Activated CD4-positive, alpha-beta T cell treated with anti-CD3 and anti-CD28 coated beads for 36 hours (primary cell): ENCODE measurements at regions of chr4 and their contacts with region 1.

Region 1: GRCh38 chr4:74320559-74321118 is 12.4 kb downstream of the EPGN start:
- DNase-seq: peak; percentile 66
- ATAC-seq: peak; percentile 99
- H3K4me3 Mint-ChIP-seq: no peak overlapping the region
- H3K27ac Mint-ChIP-seq: no peak overlapping the region
- H3K4me1 Mint-ChIP-seq: peaks cover 5% of the 10 kb centered on the region
- H3K27me3 Mint-ChIP-seq: peaks cover 2% of the 10 kb centered on the region

Region 2: GRCh38 chr4:74370912-74371311 is 50.3 kb after region 1 on chr4:
- CTCF ChIA-PET with region 1: interaction called, 5 read pairs
- POLR2A ChIA-PET with region 1: no interaction called
- intact Hi-C with region 1: loop called in 1 of 2 experiments (anchors 5 kb)
- DNase-seq: peak; percentile 41
- ATAC-seq: peak; percentile 78
- H3K4me3 Mint-ChIP-seq: no peak overlapping the region
- H3K27ac Mint-ChIP-seq: no peak overlapping the region
- H3K4me1 Mint-ChIP-seq: peaks cover 4% of the 10 kb centered on the region
- H3K27me3 Mint-ChIP-seq: peaks cover 12% of the 10 kb centered on the region

Region 3: GRCh38 chr4:74874753-74875367 is 554.2 kb after region 1 on chr4:
- CTCF ChIA-PET with region 1: no interaction called
- POLR2A ChIA-PET with region 1: no interaction called
- intact Hi-C with region 1: no loop called
- DNase-seq: peak; percentile 16
- ATAC-seq: peak; percentile 72
- H3K4me3 Mint-ChIP-seq: no peak overlapping the region
- H3K27ac Mint-ChIP-seq: no peak overlapping the region
- H3K4me1 Mint-ChIP-seq: no peaks in the 10 kb centered on the region
- H3K27me3 Mint-ChIP-seq: peaks cover 11% of the 10 kb centered on the region